Posterior vena cava (tissue), 2 donors: ENCODE measurements at regions of chr16 and their contacts with region 1.

Region 1: DNA sequence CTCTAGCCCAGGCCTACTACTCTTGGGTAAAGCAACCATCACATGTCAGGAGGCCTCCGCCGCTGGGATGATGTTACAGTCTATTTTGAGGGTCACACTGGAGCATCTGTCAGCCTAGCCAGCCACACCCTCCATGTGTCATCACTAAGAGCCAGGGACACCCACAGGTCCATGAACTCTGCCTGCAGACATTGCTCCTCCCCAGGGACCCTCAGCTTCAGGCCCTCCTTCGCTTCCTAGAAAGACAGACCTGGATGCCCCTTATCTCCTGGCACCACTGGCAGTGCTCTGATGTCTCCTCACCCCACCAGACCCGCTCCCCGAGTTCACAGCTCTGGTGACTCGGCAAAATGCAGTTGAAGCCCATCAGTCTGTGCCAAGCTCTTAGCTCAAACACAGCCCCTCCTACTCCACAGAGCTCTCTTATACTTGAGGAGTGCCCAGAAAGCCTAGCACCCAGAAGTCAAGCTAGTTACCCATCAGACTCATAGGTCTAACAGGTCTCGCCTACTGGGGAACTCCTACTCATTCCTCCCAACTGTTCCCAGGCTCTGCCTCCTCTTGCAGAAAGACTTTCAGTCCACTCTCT is 5.9 kb downstream of the RANBP10 start:
- DNase-seq: no peak

Region 2: DNA sequence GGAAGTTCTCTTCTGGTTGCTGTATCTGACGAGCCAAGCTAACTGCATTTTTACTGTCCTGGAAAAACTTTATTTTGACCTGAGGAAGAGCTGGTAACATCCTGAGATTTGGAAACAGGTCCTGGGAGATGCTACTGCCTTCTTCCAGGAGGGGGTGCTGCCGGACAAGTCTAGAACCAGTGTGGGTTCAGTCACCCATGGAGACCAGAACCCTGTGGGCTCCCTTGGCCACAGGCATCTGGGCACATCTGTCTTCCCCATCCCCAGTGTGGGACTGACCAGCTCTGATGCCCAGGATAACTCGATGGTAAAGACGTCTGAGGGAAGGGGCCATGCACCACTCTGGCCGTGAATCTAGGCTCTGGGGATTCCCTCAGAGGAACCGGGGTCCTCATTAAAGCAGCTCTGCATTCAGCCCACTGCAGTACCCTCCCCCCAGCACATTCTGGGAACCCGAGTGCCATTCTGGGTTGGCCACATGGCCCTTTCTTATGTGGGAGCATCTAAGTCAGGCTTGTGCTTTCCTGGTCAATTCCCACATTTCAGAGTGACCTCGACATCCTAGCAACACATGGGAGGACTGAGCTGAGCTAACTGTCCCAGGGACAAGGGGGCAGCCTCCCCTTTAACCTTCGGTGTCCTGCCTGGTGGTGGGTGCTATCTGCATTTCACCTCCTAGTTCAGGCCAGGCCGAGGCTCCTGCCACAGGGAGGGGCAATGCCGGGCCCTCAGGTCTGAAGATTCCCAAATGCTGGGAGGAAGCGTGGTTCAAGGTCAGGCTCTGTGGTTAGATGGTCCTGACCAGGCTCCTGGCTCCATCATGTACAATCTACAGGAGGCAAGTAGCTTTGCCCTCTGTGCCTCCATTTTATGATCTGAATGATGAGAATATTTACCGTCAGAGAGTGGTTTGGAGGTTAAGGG is 127.4 kb before region 1 on chr16:
- intact Hi-C with region 1: loop called in 1 of 2 experiments (anchors 5 kb)
- DNase-seq: peak; percentile 92